ENCODE measurements at regions of chr7 and their contacts with region 1.

Region 1: DNA sequence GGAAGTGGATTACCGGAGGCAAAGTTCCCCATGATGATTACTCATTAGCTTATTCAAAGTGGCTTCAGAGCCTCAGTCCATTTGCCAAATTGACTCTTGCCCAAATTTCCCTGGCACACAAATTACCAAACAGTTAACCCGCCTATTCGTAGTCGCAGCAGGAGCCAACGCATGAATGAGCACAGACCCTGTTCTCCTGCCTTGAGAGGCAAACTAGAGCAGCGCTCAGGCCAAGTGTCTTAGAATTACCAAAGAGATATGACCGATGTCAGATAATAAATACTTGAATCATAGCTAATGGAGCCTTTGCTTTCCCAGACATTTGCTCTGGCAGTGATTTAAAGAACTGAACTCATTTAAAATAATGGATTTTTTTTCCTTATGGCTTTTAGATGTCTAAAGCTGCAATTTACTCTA is 64.9 kb downstream of the CTTNBP2 start:
- DNase-seq: peak in 1 of 2 donors; percentile 67
- ATAC-seq: peak; percentile 89
- H3K4me3 ChIP-seq: no peak overlapping the region
- H3K27ac ChIP-seq: no peak overlapping the region
- H3K4me1 ChIP-seq: peaks cover 0 to 2% of the 10 kb centered on the region in 2 donors
- H3K27me3 ChIP-seq: no peaks in the 10 kb centered on the region

Region 2: GRCh38 chr7:117698018-117698417 is 110.3 kb before region 1 on chr7:
- intact Hi-C with region 1: no loop called
- DNase-seq: no peak
- ATAC-seq: no peak
- H3K4me3 ChIP-seq: no peak overlapping the region
- H3K27ac ChIP-seq: no peak overlapping the region
- H3K4me1 ChIP-seq: no peaks in the 10 kb centered on the region
- H3K27me3 ChIP-seq: no peaks in the 10 kb centered on the region

Region 3: DNA sequence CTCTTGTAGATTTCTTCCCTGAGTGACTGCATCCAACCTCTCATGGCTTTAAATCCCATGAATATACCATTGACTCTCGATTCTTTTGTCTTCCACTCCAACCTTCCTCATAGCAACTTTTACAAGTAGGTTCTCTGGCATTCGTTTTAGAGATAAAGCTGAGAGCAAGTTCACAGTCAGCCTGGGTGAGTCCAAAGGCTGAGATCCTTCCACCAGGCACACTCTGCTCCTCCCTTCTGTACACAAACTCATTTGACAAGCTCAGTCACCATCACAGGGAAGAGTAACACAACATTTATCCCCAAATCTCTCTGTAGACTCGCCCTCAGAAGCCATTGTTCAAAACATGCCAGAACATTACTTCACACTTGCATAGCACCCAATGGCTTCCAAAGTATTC is 54.0 kb after region 1 on chr7:
- intact Hi-C with region 1: loop called in 1 of 2 experiments (anchors 10 kb)
- DNase-seq: no peak
- ATAC-seq: no peak
- H3K4me3 ChIP-seq: no peak overlapping the region
- H3K27ac ChIP-seq: no peak overlapping the region
- H3K4me1 ChIP-seq: no peaks in the 10 kb centered on the region
- H3K27me3 ChIP-seq: no peaks in the 10 kb centered on the region

Region 4: GRCh38 chr7:117875566-117875965 is 67.2 kb after region 1 on chr7:
- intact Hi-C with region 1: no loop called
- DNase-seq: peak in 1 of 2 donors; percentile 52
- ATAC-seq: no peak
- H3K4me3 ChIP-seq: no peak overlapping the region
- H3K27ac ChIP-seq: no peak overlapping the region
- H3K4me1 ChIP-seq: no peaks in the 10 kb centered on the region
- H3K27me3 ChIP-seq: no peaks in the 10 kb centered on the region